Left cardiac atrium (tissue), 4 donors: ENCODE measurements at regions of chr7 and their contacts with region 1.

Region 1: DNA sequence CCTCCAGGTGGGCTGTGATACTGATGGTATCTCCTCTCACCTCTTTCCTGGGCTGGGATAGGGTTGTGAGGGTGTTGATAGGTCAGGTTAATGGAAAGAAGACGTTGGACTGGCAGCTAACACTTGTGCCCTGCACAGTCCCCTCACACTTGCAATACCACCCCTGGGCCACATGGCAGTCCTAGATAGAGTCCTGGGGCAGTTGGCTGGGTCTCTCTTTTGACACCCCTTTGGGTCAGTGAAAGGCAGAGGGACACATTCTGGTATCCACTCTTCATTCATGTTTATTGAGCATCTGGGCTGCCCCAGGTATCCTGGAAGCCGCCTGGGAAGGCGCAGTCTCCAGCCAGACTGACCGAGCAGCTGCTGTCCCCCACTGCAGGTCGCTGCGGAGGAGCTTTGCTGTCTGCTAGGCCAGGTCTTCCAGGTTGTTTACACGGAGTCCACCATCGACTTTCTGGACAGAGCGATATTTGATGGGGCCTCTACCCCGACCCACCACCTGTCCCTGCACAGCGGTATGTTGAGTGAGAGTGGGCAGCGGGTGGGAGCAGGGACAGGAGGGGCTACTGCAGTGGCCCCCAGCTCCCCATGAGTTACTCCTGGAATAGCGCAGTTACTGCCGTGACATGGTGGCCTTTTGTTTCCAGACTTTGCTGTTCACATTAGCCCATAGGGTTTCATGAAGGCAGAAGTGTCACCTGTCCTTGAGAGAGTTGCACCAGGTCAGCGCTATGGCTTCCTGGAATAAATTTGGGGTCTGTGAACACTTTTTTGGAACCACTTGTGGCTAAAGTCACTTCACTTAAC is 19.1 kb downstream of the NACAD start:
- DNase-seq: no peak
- ATAC-seq: no peak

Region 2: DNA sequence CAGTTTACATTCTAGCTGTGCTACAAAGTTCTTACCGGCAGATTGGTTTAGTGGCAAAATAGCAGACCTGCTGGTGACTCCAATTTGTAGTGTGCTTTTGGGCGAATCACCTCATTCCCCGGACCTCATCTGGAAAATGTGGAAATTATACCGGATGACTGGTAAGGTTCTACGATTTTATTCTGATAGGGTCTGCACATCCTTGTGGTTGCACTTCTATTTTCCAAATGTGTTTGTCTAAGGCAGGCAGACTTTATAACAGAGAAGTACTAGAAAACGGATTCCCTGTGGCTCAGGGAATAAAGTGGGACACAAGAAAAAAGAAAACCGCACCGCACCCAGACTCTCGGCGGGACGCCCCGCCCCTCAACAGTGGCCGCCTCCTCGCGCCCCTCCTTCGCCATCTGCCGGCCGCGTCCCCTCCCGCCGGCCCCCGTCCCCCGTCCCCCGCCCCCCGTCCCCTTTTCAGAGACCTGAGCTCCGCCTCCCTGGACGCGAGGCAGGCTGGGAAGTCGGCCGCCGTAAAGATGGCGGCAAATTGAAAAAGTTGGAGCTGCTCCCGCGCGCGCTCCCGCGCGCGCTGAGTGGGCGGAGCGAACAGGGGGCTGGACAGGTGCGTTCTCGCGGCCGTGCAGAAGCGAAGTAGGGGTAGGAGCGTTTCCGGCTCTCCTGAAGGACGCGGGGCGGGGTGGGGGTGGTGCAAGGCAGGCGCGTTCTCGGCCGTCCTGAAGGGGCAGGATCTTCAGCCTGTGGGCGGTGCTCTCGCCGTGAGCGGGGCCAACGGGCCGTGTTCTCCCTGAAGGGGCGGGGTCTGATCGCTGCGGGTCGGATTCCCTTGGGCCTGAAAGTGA is 70.2 kb before region 1 on chr7:
- intact Hi-C with region 1: loop called in 1 of 2 experiments (anchors 10 kb)
- DNase-seq: peak; percentile 100
- ATAC-seq: peak; percentile 96